PC-9 (cell line): ENCODE measurements at regions of chr15 and their contacts with region 1.

Region 1: GRCh38 chr15:90482124-90483011 is 47.4 kb upstream of the CRTC3 start:
- DNase-seq: peak in 1 of 2 experiments; percentile 24
- H3K4me3 ChIP-seq: no peak overlapping the region
- H3K27ac ChIP-seq: no peak overlapping the region
- H3K4me1 ChIP-seq: peaks cover 42% of the 10 kb centered on the region
- H3K27me3 ChIP-seq: no peaks in the 10 kb centered on the region
- CTCF ChIP-seq: peak; percentile 87

Region 2: GRCh38 chr15:90291679-90292356 is 190.6 kb before region 1 on chr15:
- CTCF ChIA-PET with region 1: interaction called, 6 read pairs
- POLR2A ChIA-PET with region 1: no interaction called
- intact Hi-C with region 1: loop called (anchors 1 kb)
- DNase-seq: peak; percentile 15 to 47
- H3K4me3 ChIP-seq: no peak overlapping the region
- H3K27ac ChIP-seq: no peak overlapping the region
- H3K4me1 ChIP-seq: peaks cover 4% of the 10 kb centered on the region; the same call in 1 of the 2 replicates
- H3K27me3 ChIP-seq: no peaks in the 10 kb centered on the region
- CTCF ChIP-seq: no peak

Region 3: GRCh38 chr15:90352109-90352893 is 130.1 kb before region 1 on chr15 and contains the start of gene ZNF774:
- CTCF ChIA-PET with region 1: interaction called, 4 read pairs
- POLR2A ChIA-PET with region 1: no interaction called
- intact Hi-C with region 1: loop called (anchors 1 kb)
- DNase-seq: peak; percentile 90 to 96
- H3K4me3 ChIP-seq: peak within 1 kb of the TSS; percentile 83
- H3K27ac ChIP-seq: peak within 1 kb of the TSS; percentile 80
- H3K4me1 ChIP-seq: peaks cover 12% of the 10 kb centered on the region
- H3K27me3 ChIP-seq: no peaks in the 10 kb centered on the region
- CTCF ChIP-seq: no peak
- total RNA-seq, gene ZNF774: 6.2 and 6.3 TPM in 2 replicates

Region 4: DNA sequence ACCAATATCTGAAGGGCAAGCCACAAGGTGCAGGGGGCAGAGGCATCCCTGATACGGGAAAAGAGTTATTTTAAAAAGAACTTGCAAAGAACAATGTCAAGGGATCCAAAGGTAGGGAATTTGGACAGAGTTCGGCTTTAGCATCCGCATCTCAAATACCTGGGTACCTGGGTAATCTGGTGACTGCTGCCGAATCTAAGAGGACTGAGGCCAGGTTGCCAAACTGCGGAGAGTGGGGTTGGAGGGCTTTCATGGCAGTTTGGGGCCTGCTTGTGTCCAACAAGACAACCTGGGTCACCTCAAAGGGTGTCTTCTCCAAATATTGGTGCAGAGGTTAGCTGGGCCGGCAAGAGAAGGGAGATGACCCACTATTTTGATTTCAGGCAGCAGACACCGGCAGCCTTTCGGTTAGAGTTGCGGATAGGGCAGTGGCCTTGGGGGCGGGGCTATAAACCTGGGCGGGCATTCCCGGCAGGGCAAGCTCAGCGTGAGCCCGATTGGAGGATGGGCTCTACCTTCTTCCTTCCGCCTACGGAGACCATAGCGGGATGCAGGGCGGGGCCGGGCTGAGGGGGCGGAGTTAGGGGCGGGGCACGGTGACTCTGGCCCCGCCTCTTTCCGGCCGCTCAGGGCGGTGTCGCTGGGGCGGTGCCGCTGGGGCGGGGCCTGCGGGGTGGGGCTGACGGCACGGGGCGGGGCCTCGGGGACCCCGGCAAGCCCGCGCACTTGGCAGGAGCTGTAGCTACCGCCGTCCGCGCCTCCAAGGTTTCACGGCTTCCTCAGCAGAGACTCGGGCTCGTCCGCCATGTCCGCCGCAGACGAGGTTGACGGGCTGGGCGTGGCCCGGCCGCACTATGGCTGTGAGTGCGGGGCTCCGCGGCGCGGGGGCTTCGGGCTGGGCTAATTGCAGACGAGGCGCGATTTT is 94.6 kb before region 1 on chr15 and contains the start of gene IQGAP1:
- CTCF ChIA-PET with region 1: no interaction called
- POLR2A ChIA-PET with region 1: interaction called, 3 read pairs
- intact Hi-C with region 1: loop called (anchors 1 kb)
- DNase-seq: peak; percentile 86 to 96
- H3K4me3 ChIP-seq: peak within 1 kb of the TSS; percentile 87
- H3K27ac ChIP-seq: peak within 1 kb of the TSS; percentile 58
- H3K4me1 ChIP-seq: peaks cover 16% of the 10 kb centered on the region
- H3K27me3 ChIP-seq: no peaks in the 10 kb centered on the region
- CTCF ChIP-seq: no peak
- total RNA-seq, gene IQGAP1: 113 and 164 TPM in 2 replicates

Region 5: GRCh38 chr15:90412356-90413194 is 69.8 kb before region 1 on chr15:
- CTCF ChIA-PET with region 1: no interaction called
- POLR2A ChIA-PET with region 1: no interaction called
- intact Hi-C with region 1: loop called (anchors 2 kb)
- DNase-seq: peak; percentile 67 to 89
- H3K4me3 ChIP-seq: peak overlapping the region; percentile 41; the same call in 1 of the 2 replicates
- H3K27ac ChIP-seq: peak overlapping the region; percentile 87
- H3K4me1 ChIP-seq: peaks cover 55% of the 10 kb centered on the region
- H3K27me3 ChIP-seq: no peaks in the 10 kb centered on the region
- CTCF ChIP-seq: no peak

Region 6: DNA sequence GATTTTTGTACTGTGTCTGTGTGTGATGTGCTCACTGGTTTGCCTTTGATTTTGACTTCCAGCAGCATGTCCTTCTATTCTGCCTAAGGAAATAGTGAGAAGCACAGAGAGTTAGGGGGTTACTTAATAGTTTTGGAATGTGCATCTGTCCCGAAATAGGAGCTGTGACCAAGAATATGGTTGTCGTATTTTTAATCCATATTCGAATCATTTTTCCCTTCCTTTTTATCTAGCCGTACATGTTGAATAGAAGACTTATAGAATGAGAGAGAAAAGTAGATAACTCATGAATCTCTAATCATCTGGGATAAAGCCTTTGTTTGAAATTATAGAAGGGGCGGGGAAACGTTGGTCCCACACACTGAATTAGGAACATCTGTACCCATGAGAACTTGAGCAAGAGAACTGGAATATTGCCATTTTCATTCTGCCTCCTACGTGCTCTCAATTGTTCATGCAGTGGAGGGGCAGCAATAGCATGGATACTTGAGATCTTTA is 70.9 kb after region 1 on chr15:
- CTCF ChIA-PET with region 1: no interaction called
- POLR2A ChIA-PET with region 1: no interaction called
- intact Hi-C with region 1: no loop called
- DNase-seq: no peak
- H3K4me3 ChIP-seq: no peak overlapping the region
- H3K27ac ChIP-seq: no peak overlapping the region
- H3K4me1 ChIP-seq: no peaks in the 10 kb centered on the region
- H3K27me3 ChIP-seq: no peaks in the 10 kb centered on the region
- CTCF ChIP-seq: no peak